Caco-2 (cell line): ENCODE measurements at regions of chr18 and their contacts with region 1.

Region 1: DNA sequence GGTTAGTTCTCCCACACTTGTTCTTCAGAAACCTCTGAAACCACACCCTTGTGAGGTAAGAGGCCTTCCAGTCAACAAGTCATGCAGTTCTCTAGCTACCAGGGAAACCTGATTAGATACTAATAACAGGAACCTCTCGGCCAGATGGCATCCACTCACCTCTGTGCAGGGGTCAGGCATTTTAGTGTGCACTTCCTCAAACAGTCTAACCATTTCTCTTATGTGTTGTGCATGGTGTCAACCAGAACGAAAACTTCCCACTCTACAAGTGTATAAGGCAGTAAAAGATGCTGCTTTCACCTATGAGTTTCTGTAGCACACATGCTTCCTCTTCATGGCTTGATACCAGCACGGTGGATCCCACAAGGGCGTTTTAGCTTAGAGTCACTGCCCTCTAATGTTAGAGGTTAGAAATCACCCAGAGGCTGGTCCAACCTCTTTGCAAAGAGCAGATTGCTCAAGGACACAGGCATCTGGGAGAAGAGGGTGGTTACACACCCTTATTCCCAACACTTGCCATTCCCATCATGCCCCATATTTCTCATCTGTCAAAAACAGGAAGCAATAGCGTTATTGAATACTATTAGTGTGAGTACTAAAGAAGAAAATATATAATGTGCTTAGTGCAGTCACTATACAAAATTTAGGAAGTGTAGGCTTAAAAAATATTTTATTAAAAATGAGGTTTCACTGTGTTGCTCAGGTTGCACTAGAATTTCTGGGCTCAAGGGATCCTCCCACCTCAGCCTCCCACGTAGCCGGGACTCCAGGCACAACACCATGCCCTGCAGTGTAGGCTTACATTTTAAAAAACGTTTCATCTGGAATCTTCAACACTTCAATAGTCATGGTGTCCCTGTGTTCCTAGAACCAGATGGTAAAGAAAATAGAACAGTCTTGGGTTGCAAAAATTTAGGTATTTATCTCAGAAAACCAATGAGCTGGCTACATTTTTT is 34.5 kb upstream of the RAB31 start:
- DNase-seq: peak; percentile 85 to 87
- H3K4me3 ChIP-seq: no peak overlapping the region
- H3K4me3 Mint-ChIP-seq: peak overlapping the region; percentile 67
- H3K27ac Mint-ChIP-seq: peak overlapping the region; percentile 96
- H3K4me1 ChIP-seq: peaks cover 5% of the 10 kb centered on the region
- H3K4me1 Mint-ChIP-seq: peaks cover 26% of the 10 kb centered on the region
- H3K27me3 ChIP-seq: no peaks in the 10 kb centered on the region
- H3K27me3 Mint-ChIP-seq: no peaks in the 10 kb centered on the region
- CTCF ChIP-seq: peak; percentile 18 to 46

Region 2: DNA sequence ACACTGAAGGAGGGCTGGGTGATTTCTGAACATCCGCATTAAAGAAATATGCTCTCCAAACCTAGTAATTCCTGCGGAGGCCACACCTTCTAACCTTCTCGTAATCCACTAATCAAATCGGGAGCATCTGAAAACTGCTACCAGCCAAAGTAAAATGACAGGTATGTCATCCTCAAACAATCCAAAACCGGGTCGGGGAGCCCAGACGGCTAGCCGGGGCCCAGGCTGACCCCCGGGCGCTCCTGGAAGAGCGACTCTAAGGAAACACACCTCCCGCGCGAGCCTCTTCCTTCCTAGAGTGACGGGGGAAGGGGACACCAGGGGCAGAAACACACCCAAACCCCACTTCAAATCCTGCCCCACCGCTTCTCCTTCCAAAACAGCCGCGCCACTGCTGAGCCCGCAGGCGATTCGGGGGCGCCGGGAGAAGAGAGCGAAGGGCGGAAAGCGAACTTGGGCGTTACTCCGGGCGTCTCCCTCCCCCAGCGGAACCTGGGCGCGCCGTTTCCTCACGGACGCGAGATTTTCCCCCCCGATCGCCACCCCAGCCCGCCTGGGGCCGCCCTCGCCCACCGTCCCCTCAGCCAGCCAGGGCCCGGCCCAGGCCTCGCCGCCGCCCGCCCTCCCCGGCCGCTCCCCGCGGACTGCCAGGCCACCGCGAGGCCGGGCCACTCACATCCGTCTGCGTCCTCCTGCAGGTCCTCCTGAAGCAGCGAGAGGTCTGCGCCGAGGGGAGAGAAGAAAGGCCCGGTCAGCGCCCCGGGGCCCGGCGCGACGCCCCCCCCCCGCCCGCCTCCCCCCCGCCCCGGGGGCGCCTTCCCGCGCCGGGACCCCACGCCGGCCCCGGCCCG is 59.8 kb before region 1 on chr18:
- CTCF ChIA-PET with region 1: interaction called, 13 read pairs
- POLR2A ChIA-PET with region 1: interaction called, 9 read pairs
- intact Hi-C with region 1: loop called (anchors 1 kb)
- DNase-seq: peak; percentile 70 to 84
- H3K4me3 ChIP-seq: peak overlapping the region; percentile 79
- H3K4me3 Mint-ChIP-seq: peak overlapping the region; percentile 99
- H3K27ac Mint-ChIP-seq: peak overlapping the region; percentile 94
- H3K4me1 ChIP-seq: peaks cover 35% of the 10 kb centered on the region
- H3K4me1 Mint-ChIP-seq: peaks cover 30% of the 10 kb centered on the region
- H3K27me3 ChIP-seq: no peaks in the 10 kb centered on the region
- H3K27me3 Mint-ChIP-seq: no peaks in the 10 kb centered on the region
- CTCF ChIP-seq: no peak

Region 3: GRCh38 chr18:9643549-9643948 is 30.0 kb before region 1 on chr18:
- CTCF ChIA-PET with region 1: no interaction called
- POLR2A ChIA-PET with region 1: interaction called, 3 read pairs
- intact Hi-C with region 1: loop called (anchors 1 kb)
- DNase-seq: peak; percentile 76 to 83
- H3K4me3 ChIP-seq: no peak overlapping the region
- H3K4me3 Mint-ChIP-seq: no peak overlapping the region
- H3K27ac Mint-ChIP-seq: peak overlapping the region; percentile 90
- H3K4me1 ChIP-seq: peaks cover 39% of the 10 kb centered on the region
- H3K4me1 Mint-ChIP-seq: peaks cover 14% of the 10 kb centered on the region
- H3K27me3 ChIP-seq: no peaks in the 10 kb centered on the region
- H3K27me3 Mint-ChIP-seq: no peaks in the 10 kb centered on the region
- CTCF ChIP-seq: no peak

Region 4: GRCh38 chr18:9708057-9708433 is 34.5 kb after region 1 on chr18 and contains the start of gene RAB31:
- CTCF ChIA-PET with region 1: interaction called, 3 read pairs
- POLR2A ChIA-PET with region 1: interaction called, 3 read pairs
- intact Hi-C with region 1: loop called (anchors 5 kb)
- DNase-seq: peak in 1 of 2 experiments; percentile 71
- H3K4me3 ChIP-seq: peak within 1 kb of the TSS; percentile 94
- H3K4me3 Mint-ChIP-seq: peak within 1 kb of the TSS; percentile 78
- H3K27ac Mint-ChIP-seq: peak within 1 kb of the TSS; percentile 57
- H3K4me1 ChIP-seq: peaks cover 19% of the 10 kb centered on the region
- H3K4me1 Mint-ChIP-seq: peaks cover 41% of the 10 kb centered on the region
- H3K27me3 ChIP-seq: no peaks in the 10 kb centered on the region
- H3K27me3 Mint-ChIP-seq: no peaks in the 10 kb centered on the region
- CTCF ChIP-seq: no peak
- total RNA-seq, gene RAB31: 9.5 and 14.5 TPM in 2 replicates

Region 5: GRCh38 chr18:10140461-10141282 is 467.1 kb after region 1 on chr18:
- CTCF ChIA-PET with region 1: interaction called, 12 read pairs
- POLR2A ChIA-PET with region 1: no interaction called
- intact Hi-C with region 1: no loop called
- DNase-seq: peak; percentile 74 to 82
- H3K4me3 ChIP-seq: no peak overlapping the region
- H3K4me3 Mint-ChIP-seq: peak overlapping the region; percentile 35
- H3K27ac Mint-ChIP-seq: peak overlapping the region; percentile 83
- H3K4me1 ChIP-seq: peaks cover 26% of the 10 kb centered on the region
- H3K4me1 Mint-ChIP-seq: peaks cover 30% of the 10 kb centered on the region
- H3K27me3 ChIP-seq: no peaks in the 10 kb centered on the region
- H3K27me3 Mint-ChIP-seq: no peaks in the 10 kb centered on the region
- CTCF ChIP-seq: no peak